ENCODE measurements at regions of chr11 and their contacts with region 1.

Region 1: GRCh38 chr11:123478352-123478987 is 48.4 kb downstream of the GRAMD1B start:
- DNase-seq: no peak
- ATAC-seq: no peak
- H3K4me3 Mint-ChIP-seq: peak overlapping the region; percentile 47
- H3K27ac Mint-ChIP-seq: peak overlapping the region; percentile 85
- H3K4me1 Mint-ChIP-seq: peaks cover 55% of the 10 kb centered on the region
- H3K27me3 Mint-ChIP-seq: no peaks in the 10 kb centered on the region
- CTCF ChIP-seq: peak; percentile 29

Region 2: DNA sequence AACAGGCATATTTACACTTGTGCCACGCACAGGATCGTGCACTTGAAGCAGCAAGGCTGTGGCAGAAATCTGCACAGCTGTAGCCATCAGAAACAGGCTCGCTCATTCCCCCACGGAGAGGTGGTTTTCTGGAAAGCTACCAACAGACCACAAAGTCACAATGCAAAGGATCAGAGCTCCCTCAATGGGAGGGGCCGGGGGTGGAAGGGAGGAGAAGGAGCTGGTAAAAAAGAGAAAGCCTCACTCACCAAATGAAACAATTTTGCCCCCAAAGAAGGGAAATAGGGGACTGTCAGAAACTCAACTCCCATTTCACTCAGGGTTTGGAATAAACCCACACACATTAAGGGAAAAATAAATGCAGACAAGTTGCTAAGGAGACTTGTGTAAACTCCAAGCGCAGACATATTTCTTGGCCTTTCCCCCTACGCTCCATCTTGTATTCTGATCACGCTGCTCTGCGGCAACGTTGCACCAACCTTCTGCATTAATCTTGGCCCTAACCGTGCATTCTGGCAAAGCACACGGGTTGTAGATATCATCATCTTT is 1319.2 kb before region 1 on chr11:
- CTCF ChIA-PET with region 1: no interaction called
- POLR2A ChIA-PET with region 1: no interaction called
- intact Hi-C with region 1: no loop called
- DNase-seq: no peak
- ATAC-seq: no peak
- H3K4me3 Mint-ChIP-seq: no peak overlapping the region
- H3K27ac Mint-ChIP-seq: no peak overlapping the region
- H3K4me1 Mint-ChIP-seq: peaks cover 14% of the 10 kb centered on the region
- H3K27me3 Mint-ChIP-seq: peaks cover 9% of the 10 kb centered on the region
- CTCF ChIP-seq: no peak

Region 3: DNA sequence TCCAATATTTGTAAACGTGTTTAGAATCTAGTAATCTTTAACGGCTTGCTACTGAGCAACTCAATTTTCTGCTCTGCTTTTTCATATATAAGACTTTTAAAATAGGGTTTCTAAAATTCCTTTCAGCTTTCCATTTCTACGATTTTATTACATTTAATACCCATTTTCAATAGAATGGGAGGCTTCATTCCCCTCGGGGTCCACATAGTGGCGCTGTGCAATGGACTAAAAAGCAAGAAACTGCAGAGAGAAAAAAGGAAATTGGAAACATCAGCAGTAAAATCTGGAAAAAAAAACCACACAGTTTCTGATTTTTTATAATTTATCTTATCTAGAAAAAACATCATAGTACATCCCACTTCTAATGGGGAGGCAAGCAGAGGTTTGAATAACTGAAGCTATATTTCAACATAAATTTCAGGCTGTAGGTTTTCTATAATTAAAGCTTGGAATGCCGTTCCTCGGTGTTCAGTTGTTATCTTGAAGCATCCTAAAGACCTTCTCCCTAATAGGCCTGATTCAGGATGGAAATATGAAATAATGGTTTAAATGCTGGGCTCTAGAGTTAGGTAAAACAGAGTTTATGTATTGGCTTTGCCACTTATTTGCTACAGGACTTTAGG is 614.7 kb before region 1 on chr11:
- CTCF ChIA-PET with region 1: no interaction called
- POLR2A ChIA-PET with region 1: no interaction called
- intact Hi-C with region 1: loop called (anchors 1 kb)
- DNase-seq: no peak
- ATAC-seq: no peak
- H3K4me3 Mint-ChIP-seq: no peak overlapping the region
- H3K27ac Mint-ChIP-seq: no peak overlapping the region
- H3K4me1 Mint-ChIP-seq: peaks cover 9% of the 10 kb centered on the region
- H3K27me3 Mint-ChIP-seq: peaks cover 33% of the 10 kb centered on the region
- CTCF ChIP-seq: peak; percentile 80

Region 4: GRCh38 chr11:123110356-123110755 is 368.1 kb before region 1 on chr11:
- CTCF ChIA-PET with region 1: interaction called, 10 read pairs
- POLR2A ChIA-PET with region 1: no interaction called
- intact Hi-C with region 1: loop called (anchors 1 kb)
- DNase-seq: no peak
- ATAC-seq: no peak
- H3K4me3 Mint-ChIP-seq: no peak overlapping the region
- H3K27ac Mint-ChIP-seq: no peak overlapping the region
- H3K4me1 Mint-ChIP-seq: no peaks in the 10 kb centered on the region
- H3K27me3 Mint-ChIP-seq: peaks cover 13% of the 10 kb centered on the region
- CTCF ChIP-seq: no peak

Region 5: GRCh38 chr11:123301696-123302400 is 176.6 kb before region 1 on chr11:
- CTCF ChIA-PET with region 1: interaction called, 15 read pairs
- POLR2A ChIA-PET with region 1: no interaction called
- intact Hi-C with region 1: loop called (anchors 1 kb)
- DNase-seq: peak; percentile 65
- ATAC-seq: peak; percentile 79
- H3K4me3 Mint-ChIP-seq: peak overlapping the region; percentile 68
- H3K27ac Mint-ChIP-seq: no peak overlapping the region
- H3K4me1 Mint-ChIP-seq: peaks cover 29% of the 10 kb centered on the region
- H3K27me3 Mint-ChIP-seq: peaks cover 4% of the 10 kb centered on the region
- CTCF ChIP-seq: no peak

Region 6: GRCh38 chr11:123505546-123506299 is 27.3 kb after region 1 on chr11:
- CTCF ChIA-PET with region 1: interaction called, 3 read pairs
- POLR2A ChIA-PET with region 1: interaction called, 3 read pairs
- intact Hi-C with region 1: loop called (anchors 2 kb)
- DNase-seq: no peak
- ATAC-seq: peak; percentile 42
- H3K4me3 Mint-ChIP-seq: no peak overlapping the region
- H3K27ac Mint-ChIP-seq: no peak overlapping the region
- H3K4me1 Mint-ChIP-seq: peaks cover 12% of the 10 kb centered on the region
- H3K27me3 Mint-ChIP-seq: no peaks in the 10 kb centered on the region
- CTCF ChIP-seq: no peak

Region 7: DNA sequence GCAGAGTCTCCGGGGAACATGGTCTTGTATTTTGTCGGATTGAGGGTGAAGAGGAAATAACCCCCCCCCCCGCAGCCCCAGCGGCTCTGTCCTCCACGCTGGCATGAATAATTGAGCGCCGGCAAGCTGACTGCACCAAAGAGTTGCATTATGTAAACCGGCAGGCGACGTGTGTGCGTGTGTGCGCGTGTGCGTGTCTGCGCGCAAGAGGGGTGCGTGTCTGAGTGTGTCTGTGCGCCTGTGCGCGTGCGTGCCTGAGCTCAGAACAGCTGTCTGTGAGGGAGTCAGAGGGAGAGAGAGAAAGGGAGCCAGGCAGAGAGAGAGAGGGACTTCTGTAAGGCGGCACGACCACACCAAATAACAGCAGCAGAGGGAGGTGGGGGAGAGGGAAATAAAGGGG is 81.5 kb after region 1 on chr11:
- CTCF ChIA-PET with region 1: interaction called, 3 read pairs
- POLR2A ChIA-PET with region 1: interaction called, 3 read pairs
- intact Hi-C with region 1: loop called (anchors 2 kb)
- DNase-seq: peak; percentile 38
- ATAC-seq: peak; percentile 88
- H3K4me3 Mint-ChIP-seq: peak overlapping the region; percentile 86
- H3K27ac Mint-ChIP-seq: peak overlapping the region; percentile 68
- H3K4me1 Mint-ChIP-seq: peaks cover 23% of the 10 kb centered on the region
- H3K27me3 Mint-ChIP-seq: no peaks in the 10 kb centered on the region
- CTCF ChIP-seq: no peak

Measured in activated B cell treated with CpG ODN at 0.5 μM for 24 hours (primary cell).